GM12878 (cell line): ENCODE measurements at regions of chr7 and their contacts with region 1.

Region 1: GRCh38 chr7:50418086-50418515 is 32.0 kb downstream of the FIGNL1 start:
- DNase-seq: no peak
- ATAC-seq: peak; percentile 96
- H3K4me3 ChIP-seq: no peak overlapping the region
- H3K27ac ChIP-seq: no peak overlapping the region
- H3K4me1 ChIP-seq: peaks cover 22% of the 10 kb centered on the region
- H3K27me3 ChIP-seq: no peaks in the 10 kb centered on the region
- CTCF ChIP-seq: peak; percentile 98 to 99 (median 99); a peak in 5 of 6 replicates
- EP300 ChIP-seq: no peak
- POLR2A ChIP-seq: no peak
- RAD21 ChIP-seq: peak; percentile 98

Region 2: DNA sequence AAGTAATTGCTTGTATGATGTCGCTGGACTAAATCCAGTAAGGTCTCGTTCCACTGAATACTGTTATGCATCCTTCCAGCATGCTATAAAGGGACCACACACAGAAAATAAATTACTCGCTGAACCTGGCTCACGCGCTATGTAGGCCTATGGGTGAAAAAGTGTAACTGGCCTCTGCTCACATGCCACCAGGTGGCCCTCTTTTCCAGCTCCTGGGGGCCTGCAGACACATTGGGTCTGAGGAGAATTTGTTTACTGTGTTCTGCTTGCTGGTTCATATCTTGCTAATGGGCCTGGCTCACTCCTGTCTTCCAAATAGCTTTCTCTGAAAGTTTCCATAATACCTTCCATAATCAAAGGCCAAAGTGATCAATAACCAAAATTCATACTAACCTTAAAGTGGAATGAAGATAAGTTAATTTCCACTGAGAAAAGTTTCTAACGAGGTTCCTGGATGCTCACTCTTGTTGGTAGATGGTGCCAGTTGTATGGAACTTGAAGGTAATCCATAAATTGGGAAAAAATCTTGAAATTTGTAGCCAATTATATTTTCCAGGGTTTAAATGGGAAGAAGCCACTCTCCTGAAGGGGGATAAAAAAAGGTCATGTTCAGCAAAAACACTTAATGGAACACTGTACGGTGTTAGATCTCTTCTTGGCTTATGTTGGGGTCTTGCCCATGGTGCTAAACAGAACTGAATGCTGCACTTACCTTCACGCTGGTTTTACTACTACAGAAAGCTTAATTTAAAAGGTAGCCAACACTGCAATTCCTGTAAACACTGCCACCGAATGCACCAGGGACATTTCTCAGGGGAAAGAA is 298.1 kb before region 1 on chr7:
- CTCF ChIA-PET with region 1: interaction called, 81 read pairs
- POLR2A ChIA-PET with region 1: no interaction called
- RAD21 ChIA-PET with region 1: interaction called, 40 read pairs
- SMC1A ChIA-PET with region 1: interaction called, 37 read pairs
- in situ Hi-C with region 1: no loop called
- intact Hi-C with region 1: loop called (anchors 1 kb)
- DNase-seq: no peak
- ATAC-seq: peak; percentile 98
- H3K4me3 ChIP-seq: no peak overlapping the region
- H3K27ac ChIP-seq: no peak overlapping the region
- H3K4me1 ChIP-seq: peaks cover 4% of the 10 kb centered on the region; the same call in 1 of the 2 replicates
- H3K27me3 ChIP-seq: no peaks in the 10 kb centered on the region
- CTCF ChIP-seq: peak; percentile 68 to 70 (median 69)
- EP300 ChIP-seq: no peak
- POLR2A ChIP-seq: no peak
- RAD21 ChIP-seq: peak; percentile 77

Region 3: GRCh38 chr7:50206453-50207250 is 211.4 kb before region 1 on chr7:
- CTCF ChIA-PET with region 1: interaction called, 257 read pairs
- POLR2A ChIA-PET with region 1: no interaction called
- RAD21 ChIA-PET with region 1: interaction called, 77 read pairs
- SMC1A ChIA-PET with region 1: interaction called, 122 read pairs
- in situ Hi-C with region 1: loop called (anchors 10 kb)
- intact Hi-C with region 1: loop called (anchors 1 kb)
- DNase-seq: no peak
- ATAC-seq: no peak
- H3K4me3 ChIP-seq: no peak overlapping the region
- H3K27ac ChIP-seq: no peak overlapping the region
- H3K4me1 ChIP-seq: no peaks in the 10 kb centered on the region
- H3K27me3 ChIP-seq: no peaks in the 10 kb centered on the region
- CTCF ChIP-seq: no peak
- EP300 ChIP-seq: no peak
- POLR2A ChIP-seq: no peak
- RAD21 ChIP-seq: no peak

Region 4: DNA sequence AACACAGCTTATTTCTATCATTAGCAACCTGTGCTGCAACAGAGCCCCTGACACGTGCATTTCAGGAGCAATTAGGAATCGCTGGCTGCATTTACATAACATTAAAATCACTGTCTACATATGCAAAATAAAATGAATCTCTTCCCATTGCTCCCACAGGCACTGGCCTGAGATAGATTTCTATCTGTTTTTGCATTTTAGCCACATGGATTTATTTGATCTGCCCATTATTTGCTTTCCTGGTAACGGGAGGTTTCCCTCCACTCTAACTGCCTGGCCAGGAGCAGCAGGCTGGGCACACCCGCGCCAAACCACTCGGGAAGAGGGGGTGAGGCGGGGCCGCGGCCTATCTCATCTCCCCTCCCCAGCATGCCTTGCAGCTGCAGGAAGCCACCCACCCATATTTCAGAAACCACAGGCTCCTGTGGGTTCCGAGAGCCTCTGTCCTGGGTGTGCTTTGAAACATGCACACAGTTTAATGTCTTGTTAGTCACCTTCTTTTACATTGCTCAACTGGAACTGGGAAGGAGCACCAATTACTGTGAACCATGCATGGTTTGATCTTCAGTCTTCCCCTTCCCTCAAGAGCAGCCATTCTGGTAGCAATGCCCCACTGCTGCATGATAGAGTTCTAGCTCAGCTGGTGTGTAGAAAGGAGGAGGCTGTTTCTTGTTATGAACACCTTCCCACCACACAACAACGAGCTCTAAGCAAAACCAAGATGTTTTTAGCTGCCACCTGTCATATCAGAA is 151.3 kb before region 1 on chr7:
- CTCF ChIA-PET with region 1: interaction called, 23 read pairs
- POLR2A ChIA-PET with region 1: no interaction called
- RAD21 ChIA-PET with region 1: interaction called, 8 read pairs
- SMC1A ChIA-PET with region 1: interaction called, 23 read pairs
- in situ Hi-C with region 1: no loop called
- intact Hi-C with region 1: no loop called
- DNase-seq: peak; percentile 84
- ATAC-seq: peak; percentile 56
- H3K4me3 ChIP-seq: peak overlapping the region; percentile 31; the same call in 1 of the 2 replicates
- H3K27ac ChIP-seq: peak overlapping the region; percentile 77
- H3K4me1 ChIP-seq: peaks cover 87% of the 10 kb centered on the region
- H3K27me3 ChIP-seq: no peaks in the 10 kb centered on the region
- CTCF ChIP-seq: no peak
- EP300 ChIP-seq: peak in 1 of 2 experiments; percentile 38; a peak in 1 of 4 replicates
- POLR2A ChIP-seq: peak; percentile 27; the same call in 1 of the 2 replicates
- RAD21 ChIP-seq: no peak

Region 5: GRCh38 chr7:50335795-50336754 is 82.0 kb before region 1 on chr7:
- CTCF ChIA-PET with region 1: interaction called, 12 read pairs
- POLR2A ChIA-PET with region 1: no interaction called
- RAD21 ChIA-PET with region 1: interaction called, 4 read pairs
- SMC1A ChIA-PET with region 1: interaction called, 5 read pairs
- in situ Hi-C with region 1: no loop called
- intact Hi-C with region 1: no loop called
- DNase-seq: no peak
- ATAC-seq: peak; percentile 13
- H3K4me3 ChIP-seq: no peak overlapping the region
- H3K27ac ChIP-seq: peak overlapping the region; percentile 75
- H3K4me1 ChIP-seq: peaks cover 75% of the 10 kb centered on the region
- H3K27me3 ChIP-seq: no peaks in the 10 kb centered on the region
- CTCF ChIP-seq: peak; percentile 4 to 30 (median 16); a peak in 3 of 6 replicates
- EP300 ChIP-seq: no peak
- POLR2A ChIP-seq: peak; percentile 45; the same call in 1 of the 2 replicates
- RAD21 ChIP-seq: peak; percentile 32; the same call in 1 of the 2 replicates

Region 6: DNA sequence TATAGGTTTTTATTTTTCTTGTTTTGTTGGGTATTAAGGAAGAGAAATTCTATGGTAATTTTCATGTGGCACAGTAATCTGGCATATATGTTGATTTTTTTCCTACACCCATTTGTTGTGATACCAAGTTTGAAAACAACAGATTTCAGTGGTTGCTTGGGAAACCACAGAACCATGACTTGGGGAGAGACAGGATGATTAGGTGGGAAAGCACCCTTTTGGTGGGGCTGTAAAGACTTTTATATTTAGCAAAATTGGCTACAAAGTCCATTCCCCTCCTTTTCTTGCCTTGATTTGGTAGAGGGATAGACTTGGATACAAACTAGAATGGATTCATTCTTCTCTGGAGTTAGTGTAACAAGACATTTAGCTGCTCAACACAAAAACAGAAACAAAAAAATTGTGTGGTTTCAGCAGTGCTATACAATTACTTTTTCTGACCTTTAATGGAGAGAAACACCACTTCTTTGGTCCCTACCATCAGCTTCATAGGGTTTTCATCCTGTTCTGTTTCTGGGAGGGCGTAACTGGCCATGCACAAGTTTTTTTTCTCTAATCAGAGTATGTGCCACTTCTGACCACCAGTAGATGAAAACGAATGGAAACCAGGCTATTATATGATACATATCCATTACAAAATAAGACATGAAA is 20.7 kb before region 1 on chr7:
- CTCF ChIA-PET with region 1: interaction called, 17 read pairs
- POLR2A ChIA-PET with region 1: no interaction called
- RAD21 ChIA-PET with region 1: interaction called, 3 read pairs
- SMC1A ChIA-PET with region 1: interaction called, 4 read pairs
- in situ Hi-C with region 1: no loop called
- intact Hi-C with region 1: loop called (anchors 1 kb)
- DNase-seq: peak; percentile 64
- ATAC-seq: peak; percentile 88
- H3K4me3 ChIP-seq: 0 out of 2 replicates have a peak overlapping the region, but pooled peaks have one; percentile 6
- H3K27ac ChIP-seq: peak overlapping the region; percentile 22
- H3K4me1 ChIP-seq: peaks cover 38% of the 10 kb centered on the region
- H3K27me3 ChIP-seq: no peaks in the 10 kb centered on the region
- CTCF ChIP-seq: no peak
- EP300 ChIP-seq: peak in 1 of 2 experiments; percentile 48; a peak in 1 of 4 replicates
- POLR2A ChIP-seq: no peak
- RAD21 ChIP-seq: no peak